Naive thymus-derived CD4-positive, alpha-beta T cell (primary cell): ENCODE measurements at regions of chr4 and their contacts with region 1.

Region 1: DNA sequence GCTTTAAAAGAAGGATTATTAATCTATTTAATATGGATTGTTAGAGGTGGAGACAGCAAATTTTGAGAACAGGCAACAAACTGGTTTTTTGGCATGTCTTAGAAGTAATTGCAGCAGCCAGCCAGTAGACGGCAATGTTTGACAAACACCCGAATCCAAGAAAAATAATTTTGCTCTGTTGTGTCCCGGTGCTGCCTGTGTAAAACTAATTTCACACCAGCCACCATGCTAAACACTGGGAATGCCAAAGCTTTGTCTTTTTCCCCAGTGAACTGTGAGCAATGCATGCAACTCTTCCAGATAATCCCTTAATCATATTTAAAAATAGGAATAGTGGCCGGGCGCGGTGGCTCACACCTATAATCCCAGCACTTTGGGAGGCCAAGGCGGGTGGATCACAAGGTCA is 25.9 kb downstream of the SMIM31 start:
- DNase-seq: peak in 4 of 9 donors; percentile 2 to 18 (median 14)
- ATAC-seq: no peak
- H3K4me3 ChIP-seq: no peak overlapping the region
- H3K4me3 Mint-ChIP-seq: no peak overlapping the region
- H3K27ac ChIP-seq: no peak overlapping the region
- H3K27ac Mint-ChIP-seq: no peak overlapping the region
- H3K4me1 ChIP-seq: no peaks in the 10 kb centered on the region
- H3K4me1 Mint-ChIP-seq: no peaks in the 10 kb centered on the region
- H3K27me3 ChIP-seq: no peaks in the 10 kb centered on the region
- H3K27me3 Mint-ChIP-seq: peaks cover 0 to 2% (median 0%) of the 10 kb centered on the region in 5 donors

Region 2: DNA sequence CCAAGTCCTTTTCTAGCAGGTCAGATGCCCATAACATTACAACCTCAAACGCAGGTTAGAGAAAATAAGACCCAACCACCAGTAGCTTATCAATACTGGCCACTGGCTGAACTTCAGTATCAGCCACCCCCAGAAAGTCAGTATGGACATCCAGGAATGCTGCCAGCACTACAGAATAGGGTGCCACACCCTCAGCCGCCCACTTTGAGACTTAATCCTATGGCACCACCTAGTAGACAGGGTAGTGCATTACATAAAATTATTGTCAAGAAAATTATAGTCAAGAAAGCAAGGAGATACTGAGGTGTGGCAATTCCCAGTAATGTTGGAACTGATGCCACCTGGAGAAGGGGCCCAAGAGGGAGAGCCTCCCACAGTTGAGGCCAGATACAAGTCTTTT is 217.5 kb after region 1 on chr4:
- CTCF ChIA-PET with region 1: no interaction called
- POLR2A ChIA-PET with region 1: no interaction called
- intact Hi-C with region 1: loop called (anchors 2 to 5 kb)
- DNase-seq: no peak
- ATAC-seq: no peak
- H3K4me3 ChIP-seq: no peak overlapping the region
- H3K4me3 Mint-ChIP-seq: no peak overlapping the region
- H3K27ac ChIP-seq: no peak overlapping the region
- H3K27ac Mint-ChIP-seq: no peak overlapping the region
- H3K4me1 ChIP-seq: no peaks in the 10 kb centered on the region
- H3K4me1 Mint-ChIP-seq: no peaks in the 10 kb centered on the region
- H3K27me3 ChIP-seq: no peaks in the 10 kb centered on the region
- H3K27me3 Mint-ChIP-seq: peaks cover 12 to 25% (median 22%) of the 10 kb centered on the region in 5 donors

Region 3: GRCh38 chr4:165060942-165061341 is 281.1 kb after region 1 on chr4:
- CTCF ChIA-PET with region 1: no interaction called
- POLR2A ChIA-PET with region 1: no interaction called
- intact Hi-C with region 1: no loop called
- DNase-seq: no peak
- ATAC-seq: no peak
- H3K4me3 ChIP-seq: no peak overlapping the region
- H3K4me3 Mint-ChIP-seq: no peak overlapping the region
- H3K27ac ChIP-seq: no peak overlapping the region
- H3K27ac Mint-ChIP-seq: no peak overlapping the region
- H3K4me1 ChIP-seq: no peaks in the 10 kb centered on the region
- H3K4me1 Mint-ChIP-seq: no peaks in the 10 kb centered on the region
- H3K27me3 ChIP-seq: no peaks in the 10 kb centered on the region
- H3K27me3 Mint-ChIP-seq: no peaks in the 10 kb centered on the region

Region 4: DNA sequence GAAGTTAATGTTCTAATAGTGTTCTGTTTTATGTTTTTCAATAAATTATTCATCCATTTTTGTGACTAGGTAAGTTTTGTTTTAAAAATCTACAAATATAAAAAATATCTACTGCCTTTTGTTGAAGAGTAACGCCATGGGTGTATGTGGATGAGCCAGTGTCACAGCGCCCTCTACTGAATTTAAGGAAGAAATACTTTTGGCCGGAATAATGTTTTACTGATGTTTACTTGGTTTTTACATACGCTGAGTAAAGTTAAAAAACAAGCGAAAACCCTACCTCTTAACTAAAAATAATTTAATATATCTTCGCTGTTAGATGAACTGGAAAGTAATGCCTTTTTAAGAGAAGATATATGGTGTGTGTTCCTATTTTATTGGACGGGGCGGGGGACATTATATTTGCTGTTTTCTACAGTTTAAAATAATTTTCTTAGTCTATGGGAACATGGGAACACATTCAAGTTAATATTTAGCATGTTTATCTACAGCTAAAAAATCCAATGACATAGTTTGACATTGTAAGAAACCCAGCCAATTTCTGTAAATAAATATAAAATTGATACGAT is 685.1 kb after region 1 on chr4:
- CTCF ChIA-PET with region 1: no interaction called
- POLR2A ChIA-PET with region 1: no interaction called
- intact Hi-C with region 1: loop called in 1 of 2 experiments (anchors 1 kb)
- DNase-seq: peak in 7 of 9 donors; percentile 7 to 59 (median 39)
- ATAC-seq: peak; percentile 76
- H3K4me3 ChIP-seq: no peak overlapping the region
- H3K4me3 Mint-ChIP-seq: no peak overlapping the region
- H3K27ac ChIP-seq: no peak overlapping the region
- H3K27ac Mint-ChIP-seq: no peak overlapping the region
- H3K4me1 ChIP-seq: no peaks in the 10 kb centered on the region
- H3K4me1 Mint-ChIP-seq: no peaks in the 10 kb centered on the region
- H3K27me3 ChIP-seq: no peaks in the 10 kb centered on the region
- H3K27me3 Mint-ChIP-seq: peaks cover 0 to 6% (median 5%) of the 10 kb centered on the region in 5 donors